ENCODE measurements at regions of chr1 and their contacts with region 1.

Region 1: GRCh38 chr1:62962901-62963776 is 179.2 kb downstream of the ATG4C start:
- DNase-seq: peak; percentile 85
- ATAC-seq: peak; percentile 92
- H3K4me3 Mint-ChIP-seq: 0 out of 2 replicates have a peak overlapping the region, but pooled peaks have one; percentile 31
- H3K27ac Mint-ChIP-seq: no peak overlapping the region
- H3K4me1 Mint-ChIP-seq: peaks cover 17% of the 10 kb centered on the region
- H3K27me3 Mint-ChIP-seq: no peaks in the 10 kb centered on the region
- CTCF ChIP-seq: peak; percentile 58

Region 2: DNA sequence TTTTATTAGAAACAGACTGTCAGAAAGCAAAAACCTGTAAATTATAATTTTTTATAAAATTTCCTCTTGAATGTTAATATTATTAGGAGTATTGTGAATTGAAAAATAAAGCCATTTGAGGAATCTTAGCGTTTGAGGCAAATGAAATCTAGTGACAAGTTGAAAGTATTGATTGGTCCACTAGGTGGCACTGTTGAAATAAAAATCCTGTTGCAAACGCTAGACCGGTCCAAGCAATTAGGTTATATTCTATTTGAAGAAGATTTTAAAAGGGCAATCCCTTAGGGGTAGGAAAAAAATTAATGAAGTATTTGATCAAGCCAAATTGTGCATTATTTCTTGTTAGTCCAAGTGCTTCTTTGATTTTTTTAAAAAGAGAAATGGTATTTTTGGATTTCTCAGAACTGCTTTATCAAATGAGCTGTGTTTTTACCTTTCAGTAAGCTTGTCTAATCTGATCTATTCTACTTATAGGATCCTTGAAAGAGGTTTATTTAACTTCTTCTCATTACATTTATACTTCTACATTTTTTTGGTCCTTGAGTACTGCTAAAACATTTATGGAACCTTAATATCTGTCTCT is 121.5 kb before region 1 on chr1:
- CTCF ChIA-PET with region 1: interaction called, 18 read pairs
- POLR2A ChIA-PET with region 1: no interaction called
- DNase-seq: no peak
- ATAC-seq: peak; percentile 41; the same call in 1 of the 2 replicates
- H3K4me3 Mint-ChIP-seq: no peak overlapping the region
- H3K27ac Mint-ChIP-seq: no peak overlapping the region
- H3K4me1 Mint-ChIP-seq: peaks cover 7% of the 10 kb centered on the region
- H3K27me3 Mint-ChIP-seq: no peaks in the 10 kb centered on the region
- CTCF ChIP-seq: peak; percentile 52

Region 3: GRCh38 chr1:62926681-62927252 is 36.4 kb before region 1 on chr1:
- CTCF ChIA-PET with region 1: interaction called, 10 read pairs
- POLR2A ChIA-PET with region 1: no interaction called
- DNase-seq: no peak
- ATAC-seq: peak; percentile 16; the same call in 1 of the 2 replicates
- H3K4me3 Mint-ChIP-seq: no peak overlapping the region
- H3K27ac Mint-ChIP-seq: no peak overlapping the region
- H3K4me1 Mint-ChIP-seq: no peaks in the 10 kb centered on the region
- H3K27me3 Mint-ChIP-seq: no peaks in the 10 kb centered on the region
- CTCF ChIP-seq: no peak

Region 4: GRCh38 chr1:62989497-62989896 is 26.4 kb after region 1 on chr1:
- CTCF ChIA-PET with region 1: interaction called, 15 read pairs
- POLR2A ChIA-PET with region 1: no interaction called
- DNase-seq: no peak
- ATAC-seq: peak; percentile 82
- H3K4me3 Mint-ChIP-seq: no peak overlapping the region
- H3K27ac Mint-ChIP-seq: no peak overlapping the region
- H3K4me1 Mint-ChIP-seq: peaks cover 13% of the 10 kb centered on the region
- H3K27me3 Mint-ChIP-seq: no peaks in the 10 kb centered on the region
- CTCF ChIP-seq: no peak

Region 5: GRCh38 chr1:63051886-63052285 is 88.7 kb after region 1 on chr1:
- CTCF ChIA-PET with region 1: no interaction called
- POLR2A ChIA-PET with region 1: no interaction called
- DNase-seq: no peak
- ATAC-seq: no peak
- H3K4me3 Mint-ChIP-seq: no peak overlapping the region
- H3K27ac Mint-ChIP-seq: no peak overlapping the region
- H3K4me1 Mint-ChIP-seq: peaks cover 8% of the 10 kb centered on the region
- H3K27me3 Mint-ChIP-seq: no peaks in the 10 kb centered on the region; the same call in 1 of the 2 replicates
- CTCF ChIP-seq: no peak